GM12878 (cell line): ENCODE measurements at regions of chr21 and their contacts with region 1.

Region 1: GRCh38 chr21:21929789-21930188 is 931.6 kb downstream of the NCAM2 start:
- DNase-seq: no peak
- ATAC-seq: no peak
- H3K4me3 ChIP-seq: no peak overlapping the region
- H3K27ac ChIP-seq: no peak overlapping the region
- H3K4me1 ChIP-seq: no peaks in the 10 kb centered on the region
- H3K27me3 ChIP-seq: no peaks in the 10 kb centered on the region
- CTCF ChIP-seq: no peak
- EP300 ChIP-seq: no peak
- POLR2A ChIP-seq: no peak
- RAD21 ChIP-seq: no peak

Region 2: DNA sequence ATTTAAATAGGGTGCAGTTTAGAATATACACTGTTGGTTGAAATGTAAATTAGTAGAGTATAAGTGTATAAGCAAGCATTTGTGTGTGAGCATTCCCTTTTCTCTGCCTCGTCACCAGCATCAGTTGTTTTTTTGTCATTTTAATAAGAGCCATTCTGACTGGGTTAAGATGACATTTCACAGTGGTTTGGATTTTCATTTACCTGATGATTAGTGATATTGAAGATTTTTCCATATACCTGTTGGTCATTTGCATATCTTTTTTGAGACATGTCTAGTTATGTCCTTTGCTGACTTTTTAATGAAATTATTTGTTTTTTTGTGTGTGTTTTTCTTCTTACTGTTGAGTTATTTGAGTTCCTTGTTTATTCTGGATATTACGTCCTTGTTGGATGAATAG is 40.9 kb before region 1 on chr21:
- CTCF ChIA-PET with region 1: no interaction called
- POLR2A ChIA-PET with region 1: no interaction called
- RAD21 ChIA-PET with region 1: no interaction called
- SMC1A ChIA-PET with region 1: no interaction called
- in situ Hi-C with region 1: no loop called
- intact Hi-C with region 1: loop called (anchors 2 kb)
- DNase-seq: no peak
- ATAC-seq: no peak
- H3K4me3 ChIP-seq: no peak overlapping the region
- H3K27ac ChIP-seq: no peak overlapping the region
- H3K4me1 ChIP-seq: no peaks in the 10 kb centered on the region
- H3K27me3 ChIP-seq: no peaks in the 10 kb centered on the region
- CTCF ChIP-seq: no peak
- EP300 ChIP-seq: no peak
- POLR2A ChIP-seq: no peak
- RAD21 ChIP-seq: no peak

Region 3: DNA sequence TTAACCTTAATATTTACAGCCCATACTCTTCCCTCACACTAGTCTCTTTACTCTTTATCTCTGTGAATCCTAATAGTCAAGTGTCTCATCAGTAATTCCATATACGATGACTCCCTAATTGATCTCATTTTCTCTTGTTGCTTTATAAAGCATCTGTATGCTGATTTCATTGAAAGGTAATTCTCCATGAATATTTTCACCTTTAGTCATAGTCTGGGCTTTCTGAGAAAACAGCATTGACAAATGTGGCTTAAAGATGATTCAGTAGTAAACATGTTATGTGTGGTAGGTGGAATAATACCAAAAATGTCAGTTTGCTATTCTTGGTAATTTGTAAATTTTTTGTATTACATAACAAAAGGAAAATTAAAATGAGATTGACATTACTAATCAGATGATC is 245.0 kb after region 1 on chr21:
- CTCF ChIA-PET with region 1: no interaction called
- POLR2A ChIA-PET with region 1: no interaction called
- RAD21 ChIA-PET with region 1: no interaction called
- SMC1A ChIA-PET with region 1: no interaction called
- in situ Hi-C with region 1: no loop called
- intact Hi-C with region 1: no loop called
- DNase-seq: no peak
- ATAC-seq: no peak
- H3K4me3 ChIP-seq: no peak overlapping the region
- H3K27ac ChIP-seq: no peak overlapping the region
- H3K4me1 ChIP-seq: no peaks in the 10 kb centered on the region
- H3K27me3 ChIP-seq: no peaks in the 10 kb centered on the region
- CTCF ChIP-seq: no peak
- EP300 ChIP-seq: no peak
- POLR2A ChIP-seq: no peak
- RAD21 ChIP-seq: no peak